SK-N-SH (cell line): ENCODE measurements at regions of chr3 and their contacts with region 1.

Region 1: DNA sequence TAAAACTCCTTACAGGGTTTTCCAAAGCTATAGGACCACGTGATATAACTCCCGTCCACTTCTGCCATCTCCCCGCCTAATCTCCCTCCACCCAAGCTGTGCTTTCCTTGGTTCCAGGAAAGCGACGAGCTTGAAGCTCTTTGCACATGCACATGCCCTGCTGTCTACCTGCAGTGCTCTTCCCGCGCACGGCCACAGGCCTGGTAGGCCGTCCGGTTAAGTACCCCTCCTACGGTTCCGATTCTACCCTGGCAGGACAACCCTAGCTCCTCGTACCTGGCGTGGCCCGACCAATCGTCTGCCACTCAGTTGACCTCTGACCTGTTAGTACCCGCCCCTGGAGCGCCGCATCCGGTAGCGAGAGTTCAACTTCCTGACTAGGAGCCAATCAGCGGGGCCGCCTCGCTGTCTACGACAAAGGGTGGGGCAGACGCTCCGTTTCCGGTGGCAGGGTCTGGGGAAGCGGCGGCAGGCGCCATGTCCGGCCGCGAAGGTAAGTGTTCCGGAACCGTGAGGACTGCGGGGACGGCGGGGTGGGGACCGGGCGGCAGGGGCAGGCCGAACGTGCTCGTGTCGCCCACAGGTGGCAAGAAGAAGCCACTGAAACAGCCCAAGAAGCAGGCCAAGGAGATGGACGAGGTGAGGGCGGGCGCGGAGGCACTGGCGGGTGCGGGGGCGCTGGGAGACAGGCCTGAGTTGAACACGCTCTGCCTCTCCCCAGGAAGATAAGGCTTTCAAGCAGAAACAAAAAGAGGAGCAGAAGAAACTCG is at the starts of genes CCDC51 and TMA7:
- DNase-seq: peak; percentile 98
- H3K4me3 ChIP-seq: peak within 1 kb of the TSS; percentile 79 to 86
- H3K27ac ChIP-seq: peak within 1 kb of the TSS; percentile 64 to 86
- H3K4me1 ChIP-seq: peaks cover 8 to 20% of the 10 kb centered on the region in 2 experiments
- H3K27me3 ChIP-seq: no peaks in the 10 kb centered on the region
- CTCF ChIP-seq: no peak
- EP300 ChIP-seq: 0 out of 4 replicates have a peak, but pooled peaks of 1 of the 2 experiments have one; percentile 20
- RAD21 ChIP-seq: no peak
- polyA plus RNA-seq, gene CCDC51: 24.2 and 29.6 TPM in 2 replicates
- polyA plus RNA-seq, gene TMA7: 393 and 438 TPM in 2 replicates

Region 2: DNA sequence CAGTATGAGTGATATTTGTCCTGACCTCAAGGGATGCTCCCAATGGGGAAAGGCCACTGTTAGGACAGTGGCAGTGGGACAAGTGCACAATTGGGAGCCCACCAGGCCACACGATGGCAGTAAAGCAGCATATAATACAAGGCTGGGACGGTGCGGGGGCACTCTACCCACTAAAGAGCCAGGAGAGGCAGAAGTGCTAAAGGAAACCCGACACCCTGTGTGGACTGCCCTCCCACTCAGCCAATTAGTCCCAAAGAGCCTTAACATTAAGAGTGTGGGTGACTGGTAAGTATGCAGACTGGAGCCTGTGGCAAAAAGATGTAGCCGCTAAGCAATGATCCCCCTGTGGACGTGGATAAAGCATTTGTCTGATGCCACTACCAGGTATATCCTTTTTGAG is 207.3 kb before region 1 on chr3:
- CTCF ChIA-PET with region 1: interaction called, 120 read pairs
- POLR2A ChIA-PET with region 1: no interaction called
- DNase-seq: peak; percentile 81
- H3K4me3 ChIP-seq: peak overlapping the region in 1 of 2 experiments; percentile 29; a peak in 1 of 4 replicates
- H3K27ac ChIP-seq: no peak overlapping the region; a peak in 1 of 4 replicates
- H3K4me1 ChIP-seq: peaks cover 0 to 2% of the 10 kb centered on the region in 2 experiments; a peak in 1 of 4 replicates
- H3K27me3 ChIP-seq: no peaks in the 10 kb centered on the region
- CTCF ChIP-seq: peak; percentile 65
- EP300 ChIP-seq: no peak
- RAD21 ChIP-seq: peak; percentile 79

Region 3: GRCh38 chr3:48273594-48274211 is 166.3 kb before region 1 on chr3:
- CTCF ChIA-PET with region 1: interaction called, 379 read pairs
- POLR2A ChIA-PET with region 1: interaction called, 4 read pairs
- DNase-seq: peak; percentile 85
- H3K4me3 ChIP-seq: no peak overlapping the region; a peak in 1 of 4 replicates
- H3K27ac ChIP-seq: no peak overlapping the region
- H3K4me1 ChIP-seq: no peaks in the 10 kb centered on the region; a peak in 1 of 4 replicates
- H3K27me3 ChIP-seq: no peaks in the 10 kb centered on the region
- CTCF ChIP-seq: peak; percentile 81
- EP300 ChIP-seq: no peak
- RAD21 ChIP-seq: peak; percentile 95

Region 4: DNA sequence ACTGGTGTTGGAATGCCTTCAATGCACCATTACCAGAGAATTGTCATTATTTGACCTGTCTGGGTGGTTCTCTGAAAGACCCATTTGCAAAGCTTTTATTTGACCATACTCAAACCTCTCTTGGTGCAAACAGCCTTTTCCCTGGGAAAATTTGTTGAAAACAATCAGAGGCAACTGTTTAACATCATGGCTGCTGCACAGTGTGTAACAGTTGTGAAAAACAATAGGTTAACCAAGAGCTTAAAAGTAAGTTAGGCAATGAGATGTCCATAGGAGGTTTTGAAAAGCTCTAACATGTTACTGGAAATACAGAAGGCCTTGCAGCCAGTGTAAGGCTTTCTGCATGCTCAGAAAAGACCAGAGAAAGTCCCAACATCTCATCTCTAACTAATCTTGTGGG is 125.5 kb before region 1 on chr3:
- CTCF ChIA-PET with region 1: interaction called, 15 read pairs
- POLR2A ChIA-PET with region 1: no interaction called
- DNase-seq: no peak
- H3K4me3 ChIP-seq: no peak overlapping the region
- H3K27ac ChIP-seq: no peak overlapping the region
- H3K4me1 ChIP-seq: no peaks in the 10 kb centered on the region
- H3K27me3 ChIP-seq: no peaks in the 10 kb centered on the region
- CTCF ChIP-seq: no peak
- EP300 ChIP-seq: no peak
- RAD21 ChIP-seq: no peak

Region 5: DNA sequence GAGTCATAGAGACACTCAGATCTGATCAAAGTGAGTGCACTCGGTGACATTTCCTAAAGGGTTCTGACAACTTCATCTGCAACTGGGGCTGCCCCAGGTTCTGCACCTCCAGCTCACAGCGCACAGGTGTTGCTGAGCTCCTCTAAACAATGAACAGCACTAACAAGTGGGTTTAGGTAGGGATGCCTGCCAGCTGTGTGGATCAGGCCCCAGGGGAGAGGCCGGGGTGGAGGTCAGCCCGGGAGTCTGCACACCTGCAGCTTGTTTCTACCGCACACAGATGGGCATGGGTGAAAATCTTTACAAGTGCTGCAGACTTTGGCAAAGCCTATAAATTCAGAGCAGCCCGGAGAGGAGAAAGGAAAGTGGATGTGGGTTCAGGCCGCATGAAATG is 67.6 kb before region 1 on chr3:
- CTCF ChIA-PET with region 1: interaction called, 23 read pairs
- POLR2A ChIA-PET with region 1: no interaction called
- DNase-seq: no peak
- H3K4me3 ChIP-seq: no peak overlapping the region
- H3K27ac ChIP-seq: no peak overlapping the region
- H3K4me1 ChIP-seq: peaks cover 0 to 29% of the 10 kb centered on the region in 2 experiments; a peak in 1 of 4 replicates
- H3K27me3 ChIP-seq: no peaks in the 10 kb centered on the region
- CTCF ChIP-seq: no peak
- EP300 ChIP-seq: no peak
- RAD21 ChIP-seq: no peak

Region 6: GRCh38 chr3:48465531-48466378 is 25.8 kb after region 1 on chr3:
- CTCF ChIA-PET with region 1: interaction called, 37 read pairs
- POLR2A ChIA-PET with region 1: interaction called, 3 read pairs
- DNase-seq: peak; percentile 97
- H3K4me3 ChIP-seq: peak overlapping the region; percentile 45 to 68
- H3K27ac ChIP-seq: peak overlapping the region; percentile 99 to 100
- H3K4me1 ChIP-seq: peaks cover 16 to 67% of the 10 kb centered on the region in 2 experiments; a peak in 2 of 4 replicates
- H3K27me3 ChIP-seq: no peaks in the 10 kb centered on the region
- CTCF ChIP-seq: peak; percentile 79
- EP300 ChIP-seq: peak in 1 of 2 experiments; percentile 58; a peak in 3 of 4 replicates
- RAD21 ChIP-seq: peak; percentile 94

Region 7: GRCh38 chr3:48548729-48549705 is 109.0 kb after region 1 on chr3:
- CTCF ChIA-PET with region 1: interaction called, 24 read pairs
- POLR2A ChIA-PET with region 1: no interaction called
- DNase-seq: peak; percentile 86
- H3K4me3 ChIP-seq: no peak overlapping the region; a peak in 1 of 4 replicates
- H3K27ac ChIP-seq: no peak overlapping the region; a peak in 1 of 4 replicates
- H3K4me1 ChIP-seq: peaks cover 0 to 7% of the 10 kb centered on the region in 2 experiments; a peak in 1 of 4 replicates
- H3K27me3 ChIP-seq: no peaks in the 10 kb centered on the region
- CTCF ChIP-seq: peak; percentile 95
- EP300 ChIP-seq: no peak
- RAD21 ChIP-seq: peak; percentile 93